Breast epithelium (tissue), 4 donors: ENCODE measurements at regions of chr10 and their contacts with region 1.

Region 1: GRCh38 chr10:84375011-84375410 is 46.6 kb downstream of the CCSER2 start:
- DNase-seq: no peak
- H3K4me3 ChIP-seq: no peak overlapping the region
- H3K27ac ChIP-seq: no peak overlapping the region
- H3K4me1 ChIP-seq: no peaks in the 10 kb centered on the region
- H3K27me3 ChIP-seq: no peaks in the 10 kb centered on the region
- CTCF ChIP-seq: peak; percentile 30 to 76 (median 73)
- POLR2A ChIP-seq: no peak

Region 2: DNA sequence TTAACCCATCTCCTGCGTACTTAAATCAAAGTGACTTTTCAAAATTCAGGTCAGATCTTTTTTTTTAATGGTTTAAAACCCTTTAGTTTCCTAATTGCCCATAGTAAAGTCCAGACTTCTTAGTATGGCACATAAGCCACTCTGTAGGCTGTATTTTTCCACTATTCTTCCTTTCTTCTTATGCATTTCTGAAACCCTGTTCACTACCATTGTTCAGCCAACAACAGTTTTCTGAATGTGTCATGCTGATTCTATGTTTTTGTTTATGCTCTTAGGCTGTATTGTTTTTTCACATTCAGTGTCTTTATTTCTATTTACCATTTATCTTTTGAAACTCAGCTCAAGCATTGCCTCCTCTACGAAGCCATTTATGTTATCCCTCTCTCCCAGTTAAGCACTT is 19.9 kb before region 1 on chr10:
- intact Hi-C with region 1: loop called (anchors 2 kb)
- DNase-seq: no peak
- H3K4me3 ChIP-seq: no peak overlapping the region
- H3K27ac ChIP-seq: no peak overlapping the region
- H3K4me1 ChIP-seq: no peaks in the 10 kb centered on the region
- H3K27me3 ChIP-seq: no peaks in the 10 kb centered on the region
- CTCF ChIP-seq: no peak
- POLR2A ChIP-seq: no peak

Region 3: GRCh38 chr10:84447701-84448400 is 72.8 kb after region 1 on chr10:
- intact Hi-C with region 1: no loop called
- DNase-seq: no peak
- H3K4me3 ChIP-seq: no peak overlapping the region
- H3K27ac ChIP-seq: no peak overlapping the region
- H3K4me1 ChIP-seq: no peaks in the 10 kb centered on the region
- H3K27me3 ChIP-seq: no peaks in the 10 kb centered on the region
- CTCF ChIP-seq: no peak
- POLR2A ChIP-seq: no peak

Region 4: DNA sequence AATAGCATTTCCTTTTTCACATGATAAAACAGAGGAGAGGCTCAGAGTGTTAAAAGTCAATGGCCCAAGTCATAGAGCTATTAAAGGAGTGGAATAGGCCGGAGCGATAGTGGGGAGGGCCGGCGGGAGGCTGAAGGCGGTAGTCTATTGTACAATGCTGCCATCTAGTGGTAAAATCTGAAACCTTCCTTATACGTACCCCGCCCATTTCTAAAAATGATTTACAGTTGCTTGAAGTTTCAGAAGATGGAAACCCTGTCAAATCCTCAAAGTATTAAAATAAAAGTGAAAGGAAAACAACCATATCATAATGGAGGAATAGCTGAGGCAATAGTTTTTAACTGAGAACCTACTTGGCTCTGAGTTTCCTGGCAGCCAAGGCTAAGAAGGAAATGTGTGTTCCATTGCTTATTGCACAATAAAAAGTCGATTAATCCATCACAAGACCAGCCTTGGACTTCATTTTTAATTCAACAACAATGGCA is 162.5 kb after region 1 on chr10:
- intact Hi-C with region 1: loop called (anchors 5 kb)
- DNase-seq: no peak
- H3K4me3 ChIP-seq: no peak overlapping the region
- H3K27ac ChIP-seq: no peak overlapping the region
- H3K4me1 ChIP-seq: peaks cover 0 to 13% of the 10 kb centered on the region in 2 donors
- H3K27me3 ChIP-seq: peaks cover 0 to 7% of the 10 kb centered on the region in 2 donors
- CTCF ChIP-seq: peak; percentile 72 to 86 (median 86)
- POLR2A ChIP-seq: no peak